ENCODE measurements at regions of chr11 and their contacts with region 1.

Region 1: DNA sequence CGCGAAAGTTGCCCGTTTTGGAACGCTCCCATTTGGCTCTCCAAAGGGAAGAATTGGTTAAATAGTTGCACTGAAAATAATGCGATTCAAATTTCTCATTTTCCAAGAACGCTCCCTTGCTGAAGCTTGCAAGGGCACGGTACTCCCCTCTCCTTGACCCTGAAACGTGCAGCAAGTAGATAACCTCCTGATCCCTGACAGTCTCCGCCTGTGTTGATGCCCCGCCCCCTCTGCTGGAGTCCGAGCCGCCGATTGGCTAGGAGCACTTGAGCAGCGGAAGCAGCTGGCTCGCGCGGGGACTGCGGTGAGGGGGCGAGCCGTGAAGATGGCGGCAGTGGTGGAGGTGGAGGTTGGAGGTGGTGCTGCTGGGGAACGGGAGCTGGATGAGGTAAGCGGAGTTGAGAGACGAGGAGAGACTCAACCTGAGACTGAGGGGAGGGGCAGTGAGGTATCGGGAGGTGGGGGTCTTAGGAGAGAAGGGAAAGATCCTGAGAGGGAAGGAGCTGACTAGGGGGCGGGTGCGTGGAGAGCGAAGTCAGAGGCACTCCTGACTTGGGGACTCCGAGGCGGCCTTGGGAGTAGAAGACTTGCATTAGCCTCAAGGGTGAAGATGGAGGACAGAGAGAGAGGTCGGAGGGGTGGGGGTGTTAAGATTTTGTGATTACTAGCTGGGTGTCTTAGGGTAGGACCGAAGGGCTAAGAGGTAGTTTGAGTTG is at the start of gene RNF121:
- DNase-seq: peak; percentile 94
- H3K4me3 Mint-ChIP-seq: peak within 1 kb of the TSS; percentile 91
- H3K27ac Mint-ChIP-seq: peak within 1 kb of the TSS; percentile 98
- H3K4me1 Mint-ChIP-seq: peaks cover 23% of the 10 kb centered on the region
- H3K27me3 Mint-ChIP-seq: no peaks in the 10 kb centered on the region
- CTCF ChIP-seq: no peak
- total RNA-seq, gene RNF121: 27.8 and 29.8 TPM in 2 replicates

Region 2: DNA sequence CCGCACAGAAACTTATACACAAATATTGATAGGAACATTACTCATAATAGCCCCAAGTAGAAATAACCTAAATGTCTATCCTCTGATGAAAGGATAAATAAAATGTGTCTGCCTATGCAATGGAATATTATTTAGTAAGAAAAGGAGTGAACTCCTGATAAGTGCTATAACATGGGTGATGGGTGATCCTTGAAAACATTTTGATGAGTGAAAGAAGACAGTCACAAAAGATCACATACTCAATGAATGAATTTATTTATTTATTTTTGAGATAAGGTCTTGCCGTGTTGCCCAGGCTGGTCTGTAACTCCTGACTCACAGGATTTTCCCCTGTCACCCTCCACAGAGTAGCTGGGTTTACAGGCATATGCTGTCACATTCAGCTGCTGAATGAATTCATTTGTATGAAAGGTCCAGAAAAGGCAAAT is 17.3 kb after region 1 on chr11:
- CTCF ChIA-PET with region 1: interaction called, 4 read pairs
- POLR2A ChIA-PET with region 1: interaction called, 28 read pairs
- intact Hi-C with region 1: no loop called
- DNase-seq: peak; percentile 23
- H3K4me3 Mint-ChIP-seq: no peak overlapping the region
- H3K27ac Mint-ChIP-seq: no peak overlapping the region
- H3K4me1 Mint-ChIP-seq: peaks cover 27% of the 10 kb centered on the region
- H3K27me3 Mint-ChIP-seq: no peaks in the 10 kb centered on the region
- CTCF ChIP-seq: no peak

Region 3: DNA sequence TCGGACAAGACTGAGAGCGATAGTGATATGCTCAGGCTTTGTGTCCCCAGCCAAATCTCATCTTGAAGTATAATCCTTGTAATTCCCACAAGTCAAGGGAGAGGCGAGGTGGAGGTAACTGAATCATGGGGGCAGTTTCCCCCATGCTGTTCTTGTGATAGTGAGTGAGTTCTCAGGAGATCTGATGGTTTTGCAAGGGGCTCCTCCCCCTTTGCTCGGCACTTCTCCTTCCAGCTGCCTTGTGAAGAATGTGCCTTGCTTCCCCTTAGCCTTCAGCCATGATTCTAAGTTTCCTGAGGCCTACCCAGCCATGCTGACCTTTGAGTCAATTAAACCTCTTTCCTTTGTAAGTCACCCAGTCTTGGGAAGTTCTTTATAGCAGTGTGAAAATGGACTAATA is 280.2 kb after region 1 on chr11:
- CTCF ChIA-PET with region 1: no interaction called
- POLR2A ChIA-PET with region 1: no interaction called
- intact Hi-C with region 1: no loop called
- DNase-seq: no peak
- H3K4me3 Mint-ChIP-seq: no peak overlapping the region
- H3K27ac Mint-ChIP-seq: no peak overlapping the region
- H3K4me1 Mint-ChIP-seq: no peaks in the 10 kb centered on the region
- H3K27me3 Mint-ChIP-seq: peaks cover 26% of the 10 kb centered on the region
- CTCF ChIP-seq: no peak